ENCODE measurements at regions of chr19 and their contacts with region 1.

Region 1: GRCh38 chr19:1223018-1223855 is 14.6 kb downstream of the CBARP start:
- DNase-seq: no peak

Region 2: DNA sequence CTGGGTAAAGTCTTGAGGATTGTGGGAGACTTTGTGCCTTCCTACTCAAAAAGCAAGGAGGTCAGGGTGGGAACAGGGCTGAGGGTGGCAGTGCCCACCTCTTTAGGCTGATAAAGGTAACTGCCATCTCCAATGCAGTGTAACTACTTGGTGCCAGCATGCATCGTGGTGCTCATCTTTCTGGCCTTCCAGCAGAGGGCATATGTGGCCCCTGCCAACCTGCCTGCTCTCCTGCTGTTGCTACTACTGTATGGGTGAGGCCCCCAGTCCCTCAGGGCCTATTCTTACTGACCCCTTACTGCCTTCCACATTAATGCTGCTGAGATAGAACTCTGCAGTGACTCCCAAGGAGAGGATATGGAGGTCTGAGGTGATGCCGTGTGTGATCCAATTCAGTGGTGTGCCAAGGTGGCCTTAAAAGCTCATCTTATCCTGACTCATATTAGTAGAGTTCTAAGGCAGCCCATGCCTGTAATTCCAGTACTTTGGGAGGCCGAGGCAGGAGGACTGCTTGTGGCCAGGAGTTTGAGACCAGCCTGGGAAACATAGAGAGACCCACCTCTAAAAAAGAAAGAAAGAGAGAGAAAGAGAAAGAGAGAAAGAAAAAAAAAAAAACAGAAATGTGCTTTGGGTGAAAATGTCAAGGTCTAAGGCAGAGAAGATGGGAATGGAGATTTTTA is 165.9 kb before region 1 on chr19:
- intact Hi-C with region 1: no loop called
- DNase-seq: no peak

Region 3: GRCh38 chr19:1241417-1242095 is 18.3 kb after region 1 on chr19 and contains the start of gene ATP5F1D:
- intact Hi-C with region 1: loop called (anchors 2 kb)
- DNase-seq: peak; percentile 98
- total RNA-seq, gene ATP5F1D: 486 TPM

Measured in cardiac septum (tissue), 1 donor.